Activated CD4-positive, alpha-beta memory T cell treated with anti-CD3 and anti-CD28 coated beads for 36 hours (primary cell): ENCODE measurements at regions of chr1 and their contacts with region 1.

Region 1: DNA sequence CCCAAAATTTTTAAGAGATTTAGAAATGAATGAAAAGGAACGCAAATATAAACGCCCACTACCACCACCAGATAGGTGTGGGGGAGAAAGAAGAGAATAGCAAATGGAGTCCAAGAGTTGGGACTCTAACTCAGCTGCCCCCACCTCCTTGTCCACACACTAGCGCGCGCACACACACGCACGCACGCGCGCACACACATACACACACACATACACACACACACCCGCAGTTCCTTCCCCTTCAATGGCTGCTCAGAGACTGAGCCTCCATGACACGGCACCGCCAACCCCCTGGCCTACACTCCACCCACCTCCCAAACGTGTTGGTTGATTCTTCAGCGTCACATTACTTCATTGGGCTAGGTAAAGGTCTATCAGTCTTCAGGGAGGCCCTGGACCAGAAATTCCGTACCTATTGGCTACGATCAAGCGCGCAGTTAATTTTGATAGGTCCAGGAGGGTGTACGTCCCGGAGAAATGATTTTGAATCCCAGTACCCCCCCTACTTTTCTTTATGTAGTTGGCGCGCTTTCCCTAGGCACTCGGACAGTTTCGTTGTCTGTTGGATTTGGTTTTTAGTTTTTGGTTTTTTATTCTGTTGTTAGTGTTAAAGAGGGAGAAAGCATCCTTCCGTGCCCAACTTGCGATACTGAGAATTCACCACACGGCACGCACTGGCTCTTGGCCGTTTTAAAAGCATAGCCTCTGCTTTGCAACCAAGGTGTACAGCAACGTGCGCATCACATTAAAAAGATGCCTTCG is at the start of gene ANP32E:
- DNase-seq: peak; percentile 97
- H3K4me3 Mint-ChIP-seq: no peak within 1 kb of the TSS
- H3K27ac Mint-ChIP-seq: no peak within 1 kb of the TSS
- H3K4me1 Mint-ChIP-seq: peaks cover 17% of the 10 kb centered on the region
- H3K27me3 Mint-ChIP-seq: no peaks in the 10 kb centered on the region
- total RNA-seq, gene ANP32E: 224 to 228 TPM

Region 2: DNA sequence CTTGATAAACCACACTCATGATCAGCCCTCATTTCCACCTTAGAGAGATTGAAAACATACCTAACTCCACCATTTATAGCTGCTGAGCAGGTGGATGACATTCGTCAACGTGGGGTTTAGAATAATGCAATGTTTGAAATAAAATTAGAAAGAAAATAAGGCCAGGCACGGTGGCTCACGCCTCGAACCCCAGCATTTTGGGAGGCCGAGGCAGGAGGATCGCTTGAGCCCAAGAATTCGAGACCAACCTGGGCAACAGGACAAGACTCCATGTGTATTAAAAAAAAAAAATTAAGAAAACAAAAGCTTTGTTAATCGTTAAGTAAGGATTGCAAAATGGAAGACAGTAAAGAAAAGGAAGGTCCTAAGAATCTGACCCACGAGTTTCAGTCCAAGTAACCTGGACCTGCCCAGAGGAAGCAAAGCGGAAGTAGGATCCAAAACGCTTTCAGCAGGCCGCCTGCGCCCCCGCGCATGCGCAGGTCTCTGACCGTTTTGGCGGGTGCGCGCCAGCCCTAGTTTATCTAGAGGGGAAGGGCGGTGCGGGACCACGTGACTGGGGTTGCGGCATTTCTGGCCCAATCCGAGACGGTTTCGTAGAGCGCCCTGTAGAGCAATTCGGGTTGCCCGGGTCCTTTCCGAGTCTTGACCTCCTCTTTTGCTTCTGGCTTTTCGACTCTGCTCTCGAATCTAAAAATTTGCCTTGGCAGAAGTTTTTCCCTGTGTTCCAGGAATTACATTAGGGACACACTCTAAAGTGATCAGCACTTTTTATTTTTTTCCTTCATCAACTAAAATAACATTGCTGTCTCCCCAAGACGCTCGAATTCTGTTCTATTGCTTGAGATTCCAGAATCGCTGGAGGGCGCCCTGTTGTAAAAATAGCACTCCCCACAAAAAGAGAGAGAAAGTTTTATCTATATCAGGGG is 22.6 kb before region 1 on chr1:
- CTCF ChIA-PET with region 1: interaction called, 3 read pairs
- POLR2A ChIA-PET with region 1: interaction called, 6 read pairs
- intact Hi-C with region 1: loop called (anchors 1 kb)
- DNase-seq: peak; percentile 96
- H3K4me3 Mint-ChIP-seq: peak overlapping the region; percentile 87
- H3K27ac Mint-ChIP-seq: peak overlapping the region; percentile 96
- H3K4me1 Mint-ChIP-seq: peaks cover 14% of the 10 kb centered on the region
- H3K27me3 Mint-ChIP-seq: no peaks in the 10 kb centered on the region

Region 3: DNA sequence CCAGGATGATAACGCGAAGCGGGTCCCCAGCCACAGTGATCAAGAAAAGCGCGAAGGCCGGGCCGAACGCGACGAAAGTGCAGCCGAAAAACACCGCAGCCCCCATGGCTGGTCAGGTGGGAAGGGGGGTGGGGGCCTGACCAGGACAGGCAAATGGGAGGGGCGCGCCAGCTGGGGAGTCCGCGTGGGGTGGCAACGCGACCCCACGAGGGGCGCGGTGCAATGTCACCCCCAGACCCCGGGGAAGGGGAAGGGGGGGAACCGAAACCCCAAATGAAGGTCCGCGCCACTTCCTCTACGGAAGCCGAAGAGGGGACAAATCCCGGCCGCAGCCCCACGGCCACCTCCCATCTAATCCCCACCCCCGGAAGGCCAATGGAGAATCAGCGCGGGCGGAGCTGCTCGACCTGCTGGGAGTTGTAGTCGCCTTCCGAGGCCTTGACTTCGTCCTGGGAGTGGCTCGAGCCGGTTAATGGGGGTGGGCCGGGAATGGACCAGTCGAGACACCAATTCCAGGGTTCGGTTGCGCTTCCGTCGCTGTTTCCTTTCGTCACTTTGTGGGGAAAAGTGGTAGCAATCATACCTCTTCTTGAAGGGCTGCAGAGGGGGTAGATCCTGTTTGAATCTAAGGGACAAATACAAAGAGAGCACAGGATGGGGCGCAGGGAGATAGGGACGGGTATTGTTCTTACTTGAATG is 32.8 kb after region 1 on chr1 and contains the start of gene APH1A:
- CTCF ChIA-PET with region 1: interaction called, 3 read pairs
- POLR2A ChIA-PET with region 1: interaction called, 3 read pairs
- intact Hi-C with region 1: loop called (anchors 1 kb)
- DNase-seq: peak; percentile 97
- H3K4me3 Mint-ChIP-seq: peak within 1 kb of the TSS; percentile 97
- H3K27ac Mint-ChIP-seq: peak within 1 kb of the TSS; percentile 93
- H3K4me1 Mint-ChIP-seq: peaks cover 22% of the 10 kb centered on the region
- H3K27me3 Mint-ChIP-seq: no peaks in the 10 kb centered on the region
- total RNA-seq, gene APH1A: 96.6 to 96.8 TPM

Region 4: DNA sequence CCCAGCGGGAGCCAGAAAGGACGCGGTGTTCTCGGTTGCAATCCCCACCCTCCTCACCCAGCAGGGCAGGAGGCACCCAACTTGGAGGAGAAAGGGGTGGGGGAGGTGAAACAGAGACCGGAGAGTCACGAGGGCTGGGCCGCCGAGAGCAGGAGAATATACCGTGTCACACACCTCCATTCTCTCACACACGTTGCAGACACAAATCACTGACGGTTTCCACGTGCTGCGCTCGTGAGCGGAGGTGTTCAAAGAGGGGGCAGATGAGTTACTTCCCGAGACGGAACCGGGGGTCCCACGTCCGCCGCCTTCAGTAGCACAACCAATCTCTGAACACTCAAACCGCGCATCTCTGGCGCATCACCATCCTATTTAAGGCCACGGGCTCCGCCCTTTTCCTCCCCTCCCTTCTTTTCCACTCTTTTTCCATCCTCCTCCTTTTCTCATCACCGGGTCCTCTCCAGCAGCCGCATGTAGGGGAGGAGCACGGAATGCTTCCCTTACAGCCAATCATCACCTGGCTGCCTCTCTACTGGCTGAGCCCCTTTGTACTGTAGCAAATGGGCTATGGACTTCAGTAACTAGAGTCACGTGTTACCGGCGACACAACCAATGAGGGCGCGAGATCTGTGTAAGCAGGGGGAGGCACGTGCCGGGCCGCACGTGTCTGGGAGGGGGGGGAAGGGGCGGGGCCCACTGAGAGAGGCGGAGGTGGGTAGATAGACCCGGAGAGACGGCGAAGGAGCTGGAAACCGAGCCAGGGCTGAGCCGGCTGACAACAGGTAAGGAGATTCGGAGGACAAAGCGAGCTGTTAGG is 46.0 kb after region 1 on chr1 and contains the start of gene CIART:
- CTCF ChIA-PET with region 1: no interaction called
- POLR2A ChIA-PET with region 1: no interaction called
- intact Hi-C with region 1: loop called (anchors 5 kb)
- DNase-seq: peak; percentile 86
- H3K4me3 Mint-ChIP-seq: peak within 1 kb of the TSS; percentile 76
- H3K27ac Mint-ChIP-seq: peak within 1 kb of the TSS; percentile 40
- H3K4me1 Mint-ChIP-seq: peaks cover 27% of the 10 kb centered on the region
- H3K27me3 Mint-ChIP-seq: no peaks in the 10 kb centered on the region
- total RNA-seq, gene CIART: 1.3 to 1.5 TPM

Region 5: GRCh38 chr1:150321826-150322166 is 85.8 kb after region 1 on chr1:
- CTCF ChIA-PET with region 1: no interaction called
- POLR2A ChIA-PET with region 1: interaction called, 4 read pairs
- intact Hi-C with region 1: loop called (anchors 1 kb)
- DNase-seq: no peak
- H3K4me3 Mint-ChIP-seq: peak overlapping the region; percentile 99
- H3K27ac Mint-ChIP-seq: peak overlapping the region; percentile 97
- H3K4me1 Mint-ChIP-seq: peaks cover 27% of the 10 kb centered on the region
- H3K27me3 Mint-ChIP-seq: no peaks in the 10 kb centered on the region

Region 6: GRCh38 chr1:150486964-150487762 is 251.1 kb after region 1 on chr1 and contains the start of gene TARS2:
- CTCF ChIA-PET with region 1: no interaction called
- POLR2A ChIA-PET with region 1: no interaction called
- intact Hi-C with region 1: loop called (anchors 2 kb)
- DNase-seq: peak; percentile 98
- H3K4me3 Mint-ChIP-seq: peak within 1 kb of the TSS; percentile 83
- H3K27ac Mint-ChIP-seq: peak within 1 kb of the TSS; percentile 90
- H3K4me1 Mint-ChIP-seq: peaks cover 21% of the 10 kb centered on the region
- H3K27me3 Mint-ChIP-seq: no peaks in the 10 kb centered on the region
- total RNA-seq, gene TARS2: 46.3 to 51.7 TPM